Sigmoid colon (tissue), 7 donors: ENCODE measurements at regions of chr11 and their contacts with region 1.

Region 1: DNA sequence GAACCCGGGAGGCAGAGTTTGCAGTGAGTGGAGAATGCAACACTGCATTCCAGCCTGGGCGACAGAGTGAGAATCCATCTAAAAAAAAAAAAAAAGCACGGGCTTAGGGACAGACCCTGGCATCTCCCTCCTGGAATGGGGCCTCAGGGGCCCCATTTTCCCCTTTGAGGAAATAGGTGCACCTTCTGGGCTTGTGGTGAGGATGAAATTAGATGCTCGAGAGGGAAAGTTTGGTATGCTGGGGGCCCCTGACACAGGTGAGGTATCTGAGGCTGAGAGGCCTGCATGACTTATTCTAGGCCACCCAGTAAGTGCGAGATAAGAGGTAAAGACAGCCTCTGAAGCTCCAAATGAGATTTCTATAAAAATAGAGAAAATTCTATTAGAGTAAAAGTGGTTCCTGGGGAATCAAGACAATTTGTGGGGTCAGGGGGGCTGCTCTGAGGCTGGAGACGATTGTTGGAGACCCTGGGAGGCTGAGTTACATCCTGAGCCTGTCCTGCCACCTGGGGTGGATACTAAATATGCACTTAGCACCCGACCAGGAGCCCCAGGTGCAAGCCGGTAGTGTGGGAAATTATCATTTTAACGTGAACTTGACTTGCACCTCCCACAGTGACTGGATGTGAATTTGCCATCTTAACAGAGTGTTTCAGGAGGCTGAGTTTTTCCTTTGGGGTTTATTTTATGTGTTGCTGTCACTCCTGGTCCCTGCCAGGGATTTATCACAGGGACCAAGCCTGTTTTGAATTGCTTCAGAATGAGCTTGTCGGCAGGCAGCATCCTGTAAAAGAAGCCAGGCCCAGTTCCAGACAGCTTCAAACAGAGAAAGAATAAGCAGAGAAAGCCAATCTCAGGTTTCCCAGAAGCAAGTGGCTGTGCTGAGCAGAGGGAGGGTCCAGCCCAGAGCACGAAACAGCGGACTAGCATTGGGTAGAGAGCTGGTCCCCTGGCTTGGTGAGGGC is 48.4 kb upstream of the TSKU start:
- DNase-seq: no peak
- H3K4me3 ChIP-seq: no peak overlapping the region
- H3K27ac ChIP-seq: no peak overlapping the region
- H3K4me1 ChIP-seq: peaks cover 0 to 8% (median 2%) of the 10 kb centered on the region in 4 donors
- H3K27me3 ChIP-seq: no peaks in the 10 kb centered on the region
- CTCF ChIP-seq: no peak
- EP300 ChIP-seq: no peak
- POLR2A ChIP-seq: no peak

Region 2: DNA sequence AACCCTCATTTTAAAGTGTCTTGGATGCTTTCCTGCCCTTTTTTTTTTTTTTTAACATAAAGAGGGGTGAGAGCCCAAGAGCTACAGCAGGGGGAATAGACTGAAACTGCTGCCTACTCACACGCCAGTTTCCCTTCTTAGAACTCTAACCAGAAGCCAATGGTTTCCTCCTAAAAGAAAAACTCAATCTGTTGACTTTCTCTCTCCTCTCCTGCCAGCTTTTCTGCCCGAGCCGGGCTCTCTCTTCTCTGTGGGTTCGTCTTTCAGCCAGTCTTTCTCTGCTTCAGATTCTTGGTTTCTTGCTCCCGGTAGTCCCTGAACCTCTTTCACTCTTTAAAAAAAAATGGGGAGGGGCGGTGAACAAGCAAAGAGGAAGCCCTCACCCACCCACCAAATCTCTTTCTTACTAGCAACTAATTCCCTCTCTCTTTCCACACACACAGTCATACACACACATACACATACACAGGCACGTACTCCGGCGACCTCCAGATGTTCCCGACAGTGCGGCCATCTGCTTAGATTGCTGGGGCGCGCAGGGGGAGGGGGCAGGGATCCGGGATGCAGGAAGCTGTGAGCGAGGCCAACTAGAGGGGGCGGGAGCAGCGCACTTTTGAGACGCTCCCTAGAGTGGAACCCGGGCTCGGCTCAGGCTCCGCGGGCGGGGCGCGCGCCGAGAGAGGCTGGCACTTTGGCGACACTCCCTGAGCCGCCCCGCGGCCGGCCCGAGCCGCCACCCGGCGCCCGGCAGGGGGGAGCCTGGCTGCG is 48.0 kb after region 1 on chr11:
- intact Hi-C with region 1: loop called (anchors 5 kb)
- DNase-seq: peak; percentile 95
- H3K4me3 ChIP-seq: peak overlapping the region; percentile 58 to 80 (median 76)
- H3K27ac ChIP-seq: peak overlapping the region; percentile 80 to 89 (median 82)
- H3K4me1 ChIP-seq: peaks cover 0 to 23% (median 20%) of the 10 kb centered on the region in 4 donors
- H3K27me3 ChIP-seq: no peaks in the 10 kb centered on the region
- CTCF ChIP-seq: no peak
- EP300 ChIP-seq: no peak
- POLR2A ChIP-seq: no peak

Region 3: DNA sequence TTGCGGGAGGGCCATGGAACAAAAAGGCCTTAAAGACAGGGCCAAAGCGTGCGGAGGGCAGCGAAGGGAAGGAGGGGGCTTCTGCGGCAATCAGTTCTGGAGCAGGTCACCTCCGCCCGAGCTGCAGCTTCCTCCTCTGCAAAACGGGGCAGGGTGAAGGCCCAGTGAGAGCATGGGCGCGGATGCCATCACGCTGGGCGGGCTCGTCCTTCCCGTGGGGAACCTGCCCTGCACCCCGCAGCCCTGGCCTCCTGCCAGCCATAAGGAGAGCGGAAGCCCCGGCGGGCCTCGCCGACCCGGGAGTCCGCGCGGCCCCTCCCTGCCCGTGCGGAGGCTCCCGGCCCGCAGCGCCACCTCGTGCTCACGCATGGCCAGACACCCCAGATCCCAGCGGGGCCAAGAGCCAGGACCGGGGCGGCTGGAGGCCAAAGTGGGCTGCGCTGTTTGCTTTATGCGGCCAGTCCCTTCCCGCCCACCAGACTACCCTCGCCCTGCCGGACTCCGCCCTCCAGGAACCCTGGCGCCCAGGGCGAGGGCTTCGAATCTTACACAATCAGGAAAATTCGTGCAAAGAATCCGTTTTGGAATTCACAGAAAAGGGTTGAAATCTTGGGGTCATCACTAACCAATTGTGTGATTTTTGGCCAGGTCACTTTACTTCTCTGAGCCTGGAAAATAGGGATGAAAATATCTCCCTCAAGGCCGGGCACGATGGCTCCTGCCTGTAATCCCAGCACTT is 64.5 kb after region 1 on chr11:
- intact Hi-C with region 1: loop called (anchors 1 kb)
- DNase-seq: peak; percentile 93
- H3K4me3 ChIP-seq: peak overlapping the region; percentile 3 to 40 (median 30)
- H3K27ac ChIP-seq: peak overlapping the region in 3 of 4 donors; percentile 12 to 46 (median 37)
- H3K4me1 ChIP-seq: peaks cover 0 to 12% (median 12%) of the 10 kb centered on the region in 4 donors
- H3K27me3 ChIP-seq: no peaks in the 10 kb centered on the region
- CTCF ChIP-seq: peak; percentile 84 to 96 (median 86)
- EP300 ChIP-seq: no peak
- POLR2A ChIP-seq: no peak

Region 4: DNA sequence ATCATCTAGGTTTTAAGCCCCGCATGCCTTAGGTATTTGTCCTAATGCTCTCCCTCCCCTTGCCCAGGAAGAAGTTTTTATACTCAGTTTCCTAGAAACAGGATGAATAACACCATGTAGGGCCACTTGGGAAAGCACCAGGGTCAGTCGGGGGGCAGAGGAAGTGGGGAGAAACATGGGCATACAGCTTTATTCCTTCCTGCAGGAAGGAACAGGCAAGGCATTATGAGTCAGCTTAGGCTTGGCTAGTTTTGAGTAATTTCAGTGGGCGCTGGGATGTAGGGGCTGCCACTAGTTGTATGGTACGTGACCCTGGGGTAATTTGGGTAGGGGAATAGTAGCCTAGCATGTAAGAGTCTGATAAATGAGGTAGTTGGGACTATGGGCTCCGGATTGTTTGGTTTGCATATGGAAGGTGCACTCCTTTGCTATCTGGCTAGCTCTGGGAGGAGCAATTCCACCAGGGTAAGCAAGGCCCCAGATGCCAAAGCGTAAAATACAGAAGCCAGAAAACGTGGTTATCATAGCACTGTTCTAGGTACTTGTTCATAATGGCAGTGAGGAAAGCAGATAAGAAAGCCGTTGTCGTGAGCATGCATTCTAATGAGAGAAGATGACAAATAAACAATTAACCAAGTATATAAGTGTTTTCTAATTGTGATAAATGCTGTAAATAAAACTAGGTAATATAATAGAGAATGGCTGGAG is 150.8 kb after region 1 on chr11:
- intact Hi-C with region 1: no loop called
- DNase-seq: no peak
- H3K4me3 ChIP-seq: no peak overlapping the region
- H3K27ac ChIP-seq: no peak overlapping the region
- H3K4me1 ChIP-seq: peaks cover 0 to 6% (median 0%) of the 10 kb centered on the region in 4 donors
- H3K27me3 ChIP-seq: no peaks in the 10 kb centered on the region
- CTCF ChIP-seq: no peak
- EP300 ChIP-seq: no peak
- POLR2A ChIP-seq: no peak